Activated T-helper 1 cell treated with anti-CD3 and anti-CD28 coated beads, Interleukin-12 subunit alpha, Interleukin-12 subunit beta, Interleukin-2, Interleukin-4 antibody, amounts not matched to agents 30 ng/mL and 10 ng/mL and 1 ng/mL, durations not matched to agents 14 hours and 24 hours and 36 hours (primary cell): ENCODE measurements at regions of chr5 and their contacts with region 1.

Region 1: GRCh38 chr5:95858661-95859326 is 36.3 kb upstream of the GLRX start:
- DNase-seq: peak; percentile 84
- H3K4me3 Mint-ChIP-seq: peak overlapping the region; percentile 47
- H3K27ac Mint-ChIP-seq: peak overlapping the region; percentile 66
- H3K4me1 Mint-ChIP-seq: peaks cover 58% of the 10 kb centered on the region
- H3K27me3 Mint-ChIP-seq: no peaks in the 10 kb centered on the region

Region 2: GRCh38 chr5:95554647-95555548 is 303.9 kb before region 1 on chr5 and contains the starts of genes ARSK and SKIC3:
- intact Hi-C with region 1: no loop called
- DNase-seq: peak; percentile 90
- H3K4me3 Mint-ChIP-seq: peak within 1 kb of the TSS; percentile 94
- H3K27ac Mint-ChIP-seq: peak within 1 kb of the TSS; percentile 94
- H3K4me1 Mint-ChIP-seq: peaks cover 39% of the 10 kb centered on the region
- H3K27me3 Mint-ChIP-seq: no peaks in the 10 kb centered on the region
- total RNA-seq, gene ARSK: 3.9 and 4.2 TPM in 2 replicates
- total RNA-seq, gene SKIC3: 60.2 and 63.8 TPM in 2 replicates

Region 3: DNA sequence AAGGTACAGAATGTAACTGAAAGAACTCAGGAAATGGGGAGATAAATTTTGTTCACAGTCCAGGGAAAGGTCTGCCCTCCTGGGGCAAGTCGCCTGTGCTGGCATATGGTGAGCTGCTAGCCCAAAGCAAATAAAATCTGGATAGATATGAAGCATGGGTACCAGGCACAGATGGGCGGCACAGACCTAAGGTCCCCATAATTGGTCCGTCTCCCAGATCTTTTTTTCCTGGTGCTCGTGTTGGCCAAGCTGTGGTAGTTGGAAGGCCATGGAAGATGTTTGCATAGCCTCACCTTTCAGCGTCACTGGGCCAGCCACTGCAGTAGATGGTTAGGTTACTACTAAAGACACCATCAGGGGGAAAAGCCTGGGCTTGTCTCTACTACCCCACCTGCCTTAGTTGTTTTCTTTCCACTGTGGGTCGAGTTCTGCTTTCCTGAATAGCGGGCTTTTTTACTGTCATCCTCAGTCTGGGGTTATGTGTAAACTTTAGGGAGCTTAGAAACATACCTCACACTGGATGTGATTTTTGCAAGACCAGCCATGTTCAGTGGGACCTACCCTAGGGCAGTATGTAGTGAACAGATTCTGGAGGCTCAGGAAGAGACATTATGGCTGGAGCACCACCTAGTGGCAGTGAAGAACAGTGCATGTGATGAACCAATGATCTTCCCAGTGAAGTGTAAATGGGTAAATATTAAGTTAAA is 12.1 kb before region 1 on chr5:
- intact Hi-C with region 1: no loop called
- DNase-seq: peak; percentile 44
- H3K4me3 Mint-ChIP-seq: no peak overlapping the region
- H3K27ac Mint-ChIP-seq: no peak overlapping the region
- H3K4me1 Mint-ChIP-seq: peaks cover 37% of the 10 kb centered on the region
- H3K27me3 Mint-ChIP-seq: peaks cover 12% of the 10 kb centered on the region

Region 4: DNA sequence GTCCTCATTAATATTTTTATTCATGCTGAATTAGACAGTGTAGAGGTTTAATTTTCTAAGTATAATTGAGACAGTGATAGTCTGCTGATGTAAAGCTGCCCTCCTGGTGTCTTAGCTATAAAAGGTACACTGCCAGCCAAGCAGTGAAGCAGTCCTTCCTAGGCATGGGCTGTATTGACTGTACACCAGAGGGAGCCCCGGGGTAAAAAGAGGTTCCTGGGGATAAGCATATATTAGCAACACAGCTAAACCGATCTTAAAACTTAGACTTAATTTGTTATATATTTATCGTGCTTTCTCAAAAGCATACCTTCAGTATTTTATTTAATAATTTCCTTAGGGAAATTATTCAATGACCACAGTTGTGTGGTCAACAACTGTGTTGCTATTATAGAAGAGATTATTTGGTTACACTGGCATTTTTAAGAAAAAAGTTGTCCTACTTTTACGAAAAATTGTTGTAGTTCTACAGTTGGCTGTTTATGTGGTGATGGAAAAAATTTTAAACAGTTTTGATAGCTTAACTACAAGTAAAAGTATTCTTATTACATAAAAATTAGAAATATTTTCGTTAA is 34.1 kb after region 1 on chr5:
- intact Hi-C with region 1: loop called (anchors 2 kb)
- DNase-seq: peak; percentile 15
- H3K4me3 Mint-ChIP-seq: no peak overlapping the region
- H3K27ac Mint-ChIP-seq: no peak overlapping the region
- H3K4me1 Mint-ChIP-seq: peaks cover 25% of the 10 kb centered on the region
- H3K27me3 Mint-ChIP-seq: no peaks in the 10 kb centered on the region

Region 5: DNA sequence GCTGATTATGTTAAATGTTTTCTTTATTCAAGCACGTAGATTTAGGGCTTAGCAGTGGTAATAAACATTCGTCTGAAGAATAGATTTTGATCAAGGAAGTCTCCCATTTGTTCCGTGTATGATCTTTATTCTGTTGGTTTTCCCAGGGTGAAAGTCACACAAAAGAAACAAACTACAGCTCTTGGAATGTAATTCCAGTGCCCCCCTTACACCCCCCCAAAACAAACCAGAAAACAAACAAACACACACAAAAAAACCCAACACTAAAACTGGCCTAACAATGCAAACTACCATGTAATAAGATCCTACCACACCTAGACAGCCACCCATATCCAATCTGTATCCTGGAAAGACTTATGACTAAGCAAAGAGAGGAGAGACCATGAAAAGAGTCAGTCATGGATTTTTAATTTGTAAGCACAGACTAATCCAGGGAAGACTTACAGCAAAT is 299.1 kb after region 1 on chr5:
- intact Hi-C with region 1: loop called (anchors 5 kb)
- DNase-seq: no peak
- H3K4me3 Mint-ChIP-seq: no peak overlapping the region
- H3K27ac Mint-ChIP-seq: no peak overlapping the region
- H3K4me1 Mint-ChIP-seq: no peaks in the 10 kb centered on the region
- H3K27me3 Mint-ChIP-seq: peaks cover 18% of the 10 kb centered on the region

Region 6: GRCh38 chr5:96293966-96294883 is 435.4 kb after region 1 on chr5:
- intact Hi-C with region 1: no loop called
- DNase-seq: no peak
- H3K4me3 Mint-ChIP-seq: no peak overlapping the region
- H3K27ac Mint-ChIP-seq: no peak overlapping the region
- H3K4me1 Mint-ChIP-seq: peaks cover 14% of the 10 kb centered on the region
- H3K27me3 Mint-ChIP-seq: peaks cover 2% of the 10 kb centered on the region

Region 7: DNA sequence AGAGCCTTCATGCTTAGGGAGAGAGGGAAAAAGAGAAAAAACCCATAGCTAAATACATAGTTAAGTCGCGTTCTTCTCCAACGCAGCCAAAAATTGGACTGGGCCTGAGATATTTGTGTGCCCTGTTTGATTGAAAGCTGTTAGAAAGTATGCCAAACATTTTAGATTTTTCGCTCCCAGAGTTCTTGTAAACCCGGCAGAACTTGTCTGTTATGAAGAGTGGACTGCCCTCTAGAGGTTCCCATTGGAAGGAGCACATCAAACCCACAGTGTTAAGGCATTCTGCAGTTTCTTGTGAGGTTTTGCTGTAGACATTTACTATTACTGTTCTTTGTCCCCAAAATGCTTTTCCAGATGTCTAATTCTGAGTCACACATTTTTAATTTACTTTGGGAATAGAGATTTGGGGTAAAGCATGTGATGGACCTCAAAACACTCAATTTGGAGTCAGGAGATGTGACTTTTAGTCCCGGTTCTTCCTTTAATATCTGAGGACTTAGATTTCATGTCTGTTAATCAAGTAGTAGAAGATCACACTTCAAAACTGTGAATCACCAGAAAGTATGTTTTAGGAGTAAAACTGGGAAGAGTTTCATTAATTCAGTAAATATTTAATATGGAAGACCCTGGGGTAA is 477.7 kb after region 1 on chr5:
- intact Hi-C with region 1: loop called (anchors 1 kb)
- DNase-seq: peak; percentile 51
- H3K4me3 Mint-ChIP-seq: no peak overlapping the region
- H3K27ac Mint-ChIP-seq: no peak overlapping the region
- H3K4me1 Mint-ChIP-seq: peaks cover 10% of the 10 kb centered on the region
- H3K27me3 Mint-ChIP-seq: peaks cover 12% of the 10 kb centered on the region

Region 8: GRCh38 chr5:96439477-96440184 is 580.8 kb after region 1 on chr5:
- intact Hi-C with region 1: loop called (anchors 5 kb)
- DNase-seq: no peak
- H3K4me3 Mint-ChIP-seq: no peak overlapping the region
- H3K27ac Mint-ChIP-seq: no peak overlapping the region
- H3K4me1 Mint-ChIP-seq: peaks cover 10% of the 10 kb centered on the region
- H3K27me3 Mint-ChIP-seq: peaks cover 35% of the 10 kb centered on the region

Region 9: DNA sequence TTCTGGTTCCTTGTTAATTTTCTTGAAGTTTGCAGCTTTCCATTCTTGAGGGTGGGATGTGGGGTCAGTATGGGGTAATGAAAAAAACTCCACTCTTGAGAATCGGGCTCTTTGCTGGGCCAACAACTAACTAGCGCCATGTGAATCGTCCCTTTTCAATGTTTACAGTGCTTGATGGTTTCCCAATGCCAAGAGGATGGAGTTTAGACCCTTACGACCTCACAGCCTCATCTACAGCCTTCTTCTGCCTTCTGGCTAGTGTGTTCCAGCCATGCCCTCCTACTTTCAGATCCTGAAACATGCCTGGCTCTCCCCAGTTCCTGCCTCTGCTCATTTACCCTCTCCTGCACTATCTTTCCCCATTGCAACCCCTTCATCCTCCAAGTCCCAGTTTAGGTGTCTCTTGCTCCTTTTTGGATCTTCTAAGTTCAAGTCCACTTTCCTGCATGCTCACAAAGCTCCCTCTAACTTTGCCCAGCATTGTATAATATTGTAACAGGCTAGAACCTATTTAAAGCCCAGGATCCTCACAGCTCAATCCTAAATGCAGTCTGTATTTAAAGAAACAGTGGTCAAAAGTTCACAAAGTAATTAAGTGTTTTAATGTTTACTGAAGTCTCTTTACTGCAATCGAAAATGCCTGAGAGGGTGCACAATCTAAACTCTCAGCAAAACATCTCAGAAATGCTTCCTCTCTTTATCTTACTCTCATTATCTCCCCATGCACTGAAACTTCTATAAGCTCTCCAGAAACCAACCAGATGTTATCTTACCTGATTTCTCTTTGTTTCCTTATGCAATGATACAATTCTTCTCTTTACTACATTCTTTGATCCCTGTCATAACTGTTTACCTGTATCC is 782.8 kb after region 1 on chr5:
- intact Hi-C with region 1: no loop called
- DNase-seq: no peak
- H3K4me3 Mint-ChIP-seq: no peak overlapping the region
- H3K27ac Mint-ChIP-seq: no peak overlapping the region
- H3K4me1 Mint-ChIP-seq: peaks cover 9% of the 10 kb centered on the region
- H3K27me3 Mint-ChIP-seq: peaks cover 18% of the 10 kb centered on the region